ENCODE measurements at regions of chr12 and their contacts with region 1.

Region 1: GRCh38 chr12:99529966-99530365 is 117.6 kb upstream of the GARIN6 start:
- DNase-seq: no peak
- ATAC-seq: no peak
- H3K4me3 ChIP-seq: no peak overlapping the region
- H3K27ac ChIP-seq: no peak overlapping the region
- H3K4me1 ChIP-seq: no peaks in the 10 kb centered on the region
- H3K27me3 ChIP-seq: no peaks in the 10 kb centered on the region
- CTCF ChIP-seq: no peak
- POLR2A ChIP-seq: no peak

Region 2: GRCh38 chr12:99600388-99600787 is 70.4 kb after region 1 on chr12:
- intact Hi-C with region 1: loop called in 1 of 10 experiments (anchors 1 kb)
- DNase-seq: no peak
- ATAC-seq: no peak
- H3K4me3 ChIP-seq: no peak overlapping the region
- H3K27ac ChIP-seq: no peak overlapping the region
- H3K4me1 ChIP-seq: no peaks in the 10 kb centered on the region
- H3K27me3 ChIP-seq: no peaks in the 10 kb centered on the region
- CTCF ChIP-seq: no peak
- POLR2A ChIP-seq: no peak

Region 3: GRCh38 chr12:99842308-99842707 is 312.3 kb after region 1 on chr12:
- intact Hi-C with region 1: no loop called
- DNase-seq: no peak
- ATAC-seq: no peak
- H3K4me3 ChIP-seq: no peak overlapping the region
- H3K27ac ChIP-seq: no peak overlapping the region
- H3K4me1 ChIP-seq: no peaks in the 10 kb centered on the region
- H3K27me3 ChIP-seq: no peaks in the 10 kb centered on the region
- CTCF ChIP-seq: no peak
- POLR2A ChIP-seq: no peak

Measured in heart left ventricle (tissue), 16 donors.